ENCODE measurements at regions of chr18 and their contacts with region 1.

Region 1: GRCh38 chr18:3245853-3246634 is 1.6 kb upstream of the MYL12A start:
- DNase-seq: peak; percentile 90
- H3K4me3 ChIP-seq: peak overlapping the region; percentile 93
- H3K27ac ChIP-seq: peak overlapping the region; percentile 99
- H3K4me1 ChIP-seq: no peaks in the 10 kb centered on the region
- H3K27me3 ChIP-seq: no peaks in the 10 kb centered on the region
- CTCF ChIP-seq: peak; percentile 92

Region 2: DNA sequence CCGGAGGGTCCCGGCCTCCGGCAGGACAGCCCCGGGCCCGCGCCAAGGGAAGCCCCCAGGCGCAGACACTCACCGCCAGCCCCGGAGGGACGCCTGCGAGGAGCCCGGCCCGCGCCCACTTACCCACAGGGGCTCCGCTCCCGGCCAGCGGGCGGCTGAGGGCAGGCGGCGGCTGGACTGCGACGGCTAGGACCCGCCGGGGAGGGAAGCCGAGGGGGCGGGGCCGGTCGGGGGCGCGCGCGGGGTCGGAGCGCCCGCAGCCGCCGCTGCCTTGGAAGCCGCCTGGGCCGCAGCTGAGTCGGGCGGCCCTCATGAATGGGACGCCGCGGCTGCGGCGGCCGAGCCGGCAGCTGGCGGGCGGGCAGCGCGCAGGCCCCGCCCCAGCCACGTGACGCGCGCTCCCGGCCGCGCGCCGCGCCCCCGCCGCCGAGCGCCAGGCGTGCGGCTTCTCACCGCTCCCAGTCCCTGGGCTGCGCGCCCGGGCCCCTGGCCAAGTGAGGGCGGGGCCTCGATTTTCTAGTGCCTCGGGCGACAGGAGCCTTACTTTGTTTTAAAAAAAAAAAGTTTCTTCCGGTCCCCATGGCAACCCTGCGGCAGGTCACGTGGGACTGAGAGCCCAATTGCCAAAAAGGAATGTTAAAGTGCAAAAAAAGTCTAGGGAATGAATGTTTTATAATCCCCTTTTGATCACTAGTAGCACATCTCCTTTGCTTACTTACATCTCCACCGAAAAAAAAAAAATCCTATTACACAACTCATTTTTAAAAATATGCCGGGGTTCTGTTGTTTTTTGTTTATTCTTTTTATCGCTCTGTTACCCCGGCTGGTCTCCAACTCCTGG is 232.9 kb before region 1 on chr18 and contains the start of gene LPIN2:
- intact Hi-C with region 1: loop called (anchors 10 kb)
- DNase-seq: peak; percentile 100
- H3K4me3 ChIP-seq: peak within 1 kb of the TSS; percentile 73
- H3K27ac ChIP-seq: peak within 1 kb of the TSS; percentile 94
- H3K4me1 ChIP-seq: no peaks in the 10 kb centered on the region
- H3K27me3 ChIP-seq: no peaks in the 10 kb centered on the region
- CTCF ChIP-seq: no peak
- total RNA-seq, gene LPIN2: 23.6 to 59.0 TPM

Region 3: DNA sequence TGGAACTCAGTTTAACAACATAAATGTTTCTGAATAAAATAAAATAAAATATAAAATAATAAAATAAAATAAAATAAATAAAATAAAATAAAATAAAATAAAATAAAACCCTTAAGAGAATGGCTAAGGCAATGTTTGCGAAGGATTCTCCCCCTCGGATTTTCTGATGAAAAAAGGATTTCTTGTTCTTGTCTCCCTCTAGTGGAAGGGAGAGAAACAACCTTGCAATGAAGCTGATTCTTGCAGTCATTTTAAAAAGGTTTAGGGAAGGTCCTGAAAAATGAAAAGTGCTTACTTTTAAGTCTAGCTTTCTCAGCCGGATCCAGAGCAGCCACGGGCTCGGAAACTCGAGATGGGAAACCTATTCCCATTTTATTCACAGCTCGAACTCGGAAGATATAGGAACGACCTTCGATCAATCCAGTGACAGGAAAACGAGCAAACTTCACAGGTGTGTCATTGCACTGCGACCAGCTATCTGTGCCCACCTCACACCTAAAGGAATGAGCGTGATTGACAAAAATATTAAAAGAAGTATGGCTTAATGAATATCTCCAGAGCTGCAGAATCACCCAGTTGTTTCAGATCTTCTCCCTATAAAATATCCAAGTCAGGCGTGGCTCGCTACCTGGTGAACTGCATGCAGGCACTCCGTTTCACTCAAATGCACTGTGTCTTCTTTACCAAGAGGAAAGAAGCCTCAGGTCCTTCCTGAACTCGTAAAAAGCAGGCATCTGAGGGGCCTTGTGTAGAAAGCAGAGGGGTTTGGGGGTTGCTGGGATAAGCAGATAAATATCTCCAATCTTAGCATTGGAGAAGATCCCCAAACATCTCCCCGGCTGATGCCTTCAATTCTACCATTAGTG is 94.4 kb before region 1 on chr18:
- intact Hi-C with region 1: loop called (anchors 5 kb)
- DNase-seq: no peak
- H3K4me3 ChIP-seq: peak overlapping the region; percentile 25
- H3K27ac ChIP-seq: no peak overlapping the region
- H3K4me1 ChIP-seq: no peaks in the 10 kb centered on the region
- H3K27me3 ChIP-seq: no peaks in the 10 kb centered on the region
- CTCF ChIP-seq: peak; percentile 85

Region 4: DNA sequence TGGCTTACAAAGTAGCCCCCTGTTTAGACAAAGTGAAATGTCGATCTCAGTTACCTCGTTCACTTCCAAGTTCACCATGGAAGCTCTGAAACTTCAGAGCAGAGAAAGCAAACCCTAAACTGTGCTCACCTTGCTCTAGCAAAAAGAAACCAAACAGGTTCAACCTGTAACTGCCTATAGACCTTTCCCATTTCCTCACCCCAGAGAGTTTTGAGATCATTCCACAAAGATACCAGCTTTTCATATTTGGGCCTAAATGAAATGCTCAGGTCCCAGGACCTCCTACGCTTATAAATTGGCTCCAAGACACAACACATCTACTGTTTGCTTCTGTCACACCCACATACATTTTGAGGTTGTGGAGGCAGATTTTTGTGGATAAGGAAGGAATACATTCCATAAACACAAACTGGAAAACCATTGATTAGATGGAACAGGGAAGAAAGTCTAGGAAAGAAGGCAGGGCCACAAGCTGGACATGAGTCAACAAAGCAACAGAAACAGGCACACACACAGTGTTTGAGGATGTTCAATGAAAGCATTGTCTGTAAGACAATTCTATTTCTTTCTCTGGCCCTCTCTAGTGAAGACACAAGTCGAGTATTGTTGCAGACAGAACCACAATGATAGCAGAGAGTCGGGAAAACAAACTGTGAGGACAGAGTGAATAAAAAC is 151.2 kb after region 1 on chr18:
- intact Hi-C with region 1: no loop called
- DNase-seq: no peak
- H3K4me3 ChIP-seq: no peak overlapping the region
- H3K27ac ChIP-seq: no peak overlapping the region
- H3K4me1 ChIP-seq: no peaks in the 10 kb centered on the region
- H3K27me3 ChIP-seq: no peaks in the 10 kb centered on the region
- CTCF ChIP-seq: no peak